Activated CD4-positive, alpha-beta T cell treated with anti-CD3 and anti-CD28 coated beads, Interleukin-2, amount 10 ng/mL, durations not matched to agents 24 days and 14 days (primary cell): ENCODE measurements at regions of chr2 and their contacts with region 1.

Region 1: DNA sequence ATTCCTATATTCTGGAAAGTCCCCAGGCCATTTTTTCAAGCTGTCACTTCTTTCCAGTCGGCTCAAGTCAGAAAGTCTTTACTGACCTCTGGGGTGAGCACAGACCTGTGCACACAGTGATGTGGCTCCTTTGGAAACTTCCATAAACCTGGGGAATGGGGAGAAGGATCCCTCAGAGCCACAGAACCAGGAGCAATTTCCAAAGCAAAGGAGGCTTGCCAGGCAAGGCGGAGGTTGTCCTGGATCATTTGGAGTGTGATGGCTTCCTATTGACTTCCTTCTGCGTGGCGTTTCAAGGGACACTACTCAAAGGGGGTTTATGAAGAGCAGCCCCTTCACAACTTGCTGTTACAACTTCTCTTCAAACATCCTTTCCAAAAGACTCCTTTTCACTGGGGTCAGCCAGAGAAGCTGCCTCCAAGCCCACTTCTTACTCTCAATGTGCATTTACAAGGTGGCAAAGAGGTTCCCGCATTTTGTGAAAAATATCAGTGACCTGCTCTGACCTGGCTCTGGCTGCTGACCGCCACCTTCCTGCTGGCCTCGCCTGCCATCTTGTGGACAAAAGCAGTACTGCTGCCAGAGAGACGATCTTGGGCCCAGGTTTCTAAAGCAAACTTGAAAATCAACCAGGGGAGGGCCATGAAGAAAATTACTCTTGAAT is 18.2 kb upstream of the TMEM247 start:
- DNase-seq: peak; percentile 93
- H3K4me3 Mint-ChIP-seq: no peak overlapping the region
- H3K27ac Mint-ChIP-seq: peak overlapping the region; percentile 35
- H3K4me1 Mint-ChIP-seq: peaks cover 13% of the 10 kb centered on the region
- H3K27me3 Mint-ChIP-seq: peaks cover 4% of the 10 kb centered on the region

Region 2: GRCh38 chr2:45993476-45993991 is 467.6 kb before region 1 on chr2:
- intact Hi-C with region 1: loop called (anchors 1 kb)
- DNase-seq: peak; percentile 89
- H3K4me3 Mint-ChIP-seq: no peak overlapping the region
- H3K27ac Mint-ChIP-seq: no peak overlapping the region
- H3K4me1 Mint-ChIP-seq: peaks cover 2% of the 10 kb centered on the region
- H3K27me3 Mint-ChIP-seq: peaks cover 2% of the 10 kb centered on the region

Region 3: GRCh38 chr2:46010925-46011490 is 450.1 kb before region 1 on chr2:
- intact Hi-C with region 1: loop called (anchors 1 kb)
- DNase-seq: no peak
- H3K4me3 Mint-ChIP-seq: no peak overlapping the region
- H3K27ac Mint-ChIP-seq: no peak overlapping the region
- H3K4me1 Mint-ChIP-seq: peaks cover 16% of the 10 kb centered on the region
- H3K27me3 Mint-ChIP-seq: no peaks in the 10 kb centered on the region

Region 4: GRCh38 chr2:46062637-46063412 is 398.3 kb before region 1 on chr2:
- intact Hi-C with region 1: loop called (anchors 1 kb)
- DNase-seq: peak; percentile 92
- H3K4me3 Mint-ChIP-seq: no peak overlapping the region
- H3K27ac Mint-ChIP-seq: no peak overlapping the region
- H3K4me1 Mint-ChIP-seq: peaks cover 20% of the 10 kb centered on the region
- H3K27me3 Mint-ChIP-seq: no peaks in the 10 kb centered on the region